PC-9 (cell line): ENCODE measurements at regions of chr7 and their contacts with region 1.

Region 1: GRCh38 chr7:83162402-83163256 is at the start of gene PCLO:
- DNase-seq: peak; percentile 87 to 98
- H3K4me3 ChIP-seq: peak within 1 kb of the TSS; percentile 98
- H3K27ac ChIP-seq: peak within 1 kb of the TSS; percentile 70
- H3K4me1 ChIP-seq: peaks cover 18% of the 10 kb centered on the region
- H3K27me3 ChIP-seq: no peaks in the 10 kb centered on the region
- CTCF ChIP-seq: no peak
- total RNA-seq, gene PCLO: 2.6 and 4.0 TPM in 2 replicates

Region 2: DNA sequence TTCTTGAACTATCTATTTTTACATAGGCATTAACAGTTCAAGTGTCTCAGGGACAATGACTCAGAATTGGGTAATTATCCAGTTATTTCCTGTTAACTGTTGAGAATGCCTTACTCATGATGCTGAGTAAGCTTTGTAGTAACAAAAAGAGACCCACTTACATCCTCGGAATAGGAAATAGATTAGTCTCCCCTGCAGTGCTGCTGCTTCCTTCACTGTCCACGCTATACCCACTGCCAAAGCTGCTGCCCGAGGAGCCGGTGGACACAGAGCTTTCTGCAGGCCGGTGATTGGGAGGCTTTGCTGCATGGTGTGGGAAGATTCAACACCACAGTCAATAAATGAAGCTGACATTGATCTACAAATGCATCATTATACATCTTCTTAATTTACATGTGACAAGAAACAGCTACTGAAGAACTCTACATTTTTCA is 357.1 kb before region 1 on chr7:
- CTCF ChIA-PET with region 1: no interaction called
- POLR2A ChIA-PET with region 1: no interaction called
- intact Hi-C with region 1: loop called (anchors 5 kb)
- DNase-seq: peak; percentile 30 to 79
- H3K4me3 ChIP-seq: peak overlapping the region; percentile 29; the same call in 1 of the 2 replicates
- H3K27ac ChIP-seq: peak overlapping the region; percentile 25; the same call in 1 of the 2 replicates
- H3K4me1 ChIP-seq: 0 out of 2 replicates have a peak, but pooled peaks cover 8% of the 10 kb centered on the region
- H3K27me3 ChIP-seq: no peaks in the 10 kb centered on the region
- CTCF ChIP-seq: no peak

Region 3: GRCh38 chr7:83005410-83005809 is 157.2 kb before region 1 on chr7:
- CTCF ChIA-PET with region 1: no interaction called
- POLR2A ChIA-PET with region 1: no interaction called
- intact Hi-C with region 1: loop called (anchors 5 kb)
- DNase-seq: no peak
- H3K4me3 ChIP-seq: no peak overlapping the region
- H3K27ac ChIP-seq: no peak overlapping the region
- H3K4me1 ChIP-seq: no peaks in the 10 kb centered on the region
- H3K27me3 ChIP-seq: no peaks in the 10 kb centered on the region
- CTCF ChIP-seq: peak; percentile 50; the same call in 1 of the 2 replicates

Region 4: GRCh38 chr7:83053965-83054364 is 108.7 kb before region 1 on chr7:
- CTCF ChIA-PET with region 1: no interaction called
- POLR2A ChIA-PET with region 1: no interaction called
- intact Hi-C with region 1: loop called (anchors 5 kb)
- DNase-seq: peak in 1 of 2 experiments; percentile 82
- H3K4me3 ChIP-seq: peak overlapping the region; percentile 33; the same call in 1 of the 2 replicates
- H3K27ac ChIP-seq: no peak overlapping the region
- H3K4me1 ChIP-seq: peaks cover 31% of the 10 kb centered on the region
- H3K27me3 ChIP-seq: no peaks in the 10 kb centered on the region
- CTCF ChIP-seq: no peak

Region 5: DNA sequence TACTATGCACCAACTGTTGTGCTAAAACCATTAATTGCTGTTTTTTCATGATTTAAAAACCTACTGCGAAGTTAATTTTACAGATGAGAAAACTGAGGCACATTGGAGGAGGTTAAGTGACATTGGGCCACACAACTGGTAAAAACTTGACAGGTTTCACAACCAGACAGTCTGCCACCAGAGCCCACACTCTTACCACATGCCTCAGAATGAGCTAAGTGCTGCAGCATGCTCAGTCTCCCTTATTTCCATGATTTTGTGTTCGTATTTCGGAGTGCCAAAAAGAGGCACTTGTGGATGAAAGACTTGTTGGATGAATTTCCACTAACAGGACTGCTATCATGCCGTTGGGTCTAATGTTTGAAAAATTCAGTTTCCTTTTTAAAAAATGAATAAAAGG is 77.3 kb before region 1 on chr7:
- CTCF ChIA-PET with region 1: no interaction called
- POLR2A ChIA-PET with region 1: no interaction called
- intact Hi-C with region 1: no loop called
- DNase-seq: no peak
- H3K4me3 ChIP-seq: no peak overlapping the region
- H3K27ac ChIP-seq: no peak overlapping the region
- H3K4me1 ChIP-seq: no peaks in the 10 kb centered on the region
- H3K27me3 ChIP-seq: no peaks in the 10 kb centered on the region
- CTCF ChIP-seq: no peak

Region 6: GRCh38 chr7:83362871-83363550 is 200.4 kb after region 1 on chr7:
- CTCF ChIA-PET with region 1: no interaction called
- POLR2A ChIA-PET with region 1: no interaction called
- intact Hi-C with region 1: no loop called
- DNase-seq: no peak
- H3K4me3 ChIP-seq: no peak overlapping the region
- H3K27ac ChIP-seq: no peak overlapping the region
- H3K4me1 ChIP-seq: no peaks in the 10 kb centered on the region
- H3K27me3 ChIP-seq: no peaks in the 10 kb centered on the region
- CTCF ChIP-seq: no peak